Activated CD8-positive, alpha-beta T cell treated with anti-CD3 and anti-CD28 coated beads for 36 hours (primary cell): ENCODE measurements at regions of chr15 and their contacts with region 1.

Region 1: DNA sequence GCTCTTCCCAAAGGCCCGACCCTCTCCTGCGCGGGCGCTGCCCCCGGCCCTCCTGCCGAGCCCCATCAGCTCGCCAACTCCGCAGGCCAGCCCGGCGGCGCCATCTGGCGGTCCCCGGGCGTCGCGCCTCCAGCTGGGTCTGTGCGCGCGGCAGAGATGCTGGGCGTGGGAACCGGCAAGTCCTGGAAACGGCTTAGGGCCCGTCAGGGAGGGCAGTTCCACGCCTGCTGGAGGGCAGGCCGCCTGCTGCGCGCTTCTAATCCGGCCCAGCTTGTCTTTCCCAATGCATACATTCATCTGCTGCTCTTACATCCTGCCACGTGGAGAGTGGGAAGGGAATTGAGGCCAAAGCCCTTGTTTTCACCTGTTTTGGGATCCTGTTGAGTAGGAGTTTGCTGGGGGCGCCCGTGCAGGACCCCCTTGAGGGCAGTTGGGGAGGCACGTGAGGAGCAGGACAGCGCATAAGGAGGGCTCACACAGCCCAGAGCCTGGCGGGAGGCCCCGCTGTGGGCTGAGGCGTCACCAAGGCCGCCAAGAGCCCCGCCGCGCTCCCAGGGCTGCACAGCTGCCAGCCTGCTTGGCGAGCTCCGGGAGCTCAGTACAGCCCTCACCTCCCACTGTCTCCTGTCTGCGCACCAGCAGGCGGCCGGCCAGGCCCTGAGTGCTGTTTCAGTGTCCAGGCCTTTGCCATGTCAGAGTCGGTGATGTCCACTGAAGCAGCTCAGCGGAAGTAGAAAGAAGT is 165.6 kb downstream of the NSMCE3 start:
- DNase-seq: peak; percentile 72
- ATAC-seq: peak; percentile 87
- H3K4me3 Mint-ChIP-seq: peak overlapping the region; percentile 16
- H3K27ac Mint-ChIP-seq: no peak overlapping the region
- H3K4me1 Mint-ChIP-seq: peaks cover 5% of the 10 kb centered on the region
- H3K27me3 Mint-ChIP-seq: no peaks in the 10 kb centered on the region
- CTCF ChIP-seq: peak; percentile 75

Region 2: DNA sequence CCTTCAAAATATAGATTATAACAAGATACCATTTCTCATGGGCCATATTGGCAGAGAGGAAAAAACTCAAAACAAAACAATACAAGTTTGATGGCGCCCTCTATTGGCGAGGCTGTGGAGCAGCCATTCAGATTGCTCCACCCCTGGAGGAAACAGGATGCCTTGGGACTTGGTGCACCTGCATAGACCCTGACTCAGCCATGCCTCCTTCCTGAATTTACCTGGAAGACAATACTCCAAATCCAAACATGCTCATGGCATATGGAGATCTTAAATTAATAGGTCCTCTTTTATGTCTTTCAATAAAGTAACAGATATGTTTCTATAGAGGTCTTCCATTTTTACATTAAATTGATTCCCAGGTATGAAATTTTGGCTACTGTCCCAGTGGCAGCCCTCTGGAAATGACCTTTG is 128.2 kb before region 1 on chr15:
- CTCF ChIA-PET with region 1: interaction called, 17 read pairs
- POLR2A ChIA-PET with region 1: no interaction called
- intact Hi-C with region 1: no loop called
- DNase-seq: peak; percentile 73
- ATAC-seq: peak; percentile 82
- H3K4me3 Mint-ChIP-seq: no peak overlapping the region
- H3K27ac Mint-ChIP-seq: no peak overlapping the region
- H3K4me1 Mint-ChIP-seq: peaks cover 33% of the 10 kb centered on the region
- H3K27me3 Mint-ChIP-seq: no peaks in the 10 kb centered on the region
- CTCF ChIP-seq: peak; percentile 90

Region 3: DNA sequence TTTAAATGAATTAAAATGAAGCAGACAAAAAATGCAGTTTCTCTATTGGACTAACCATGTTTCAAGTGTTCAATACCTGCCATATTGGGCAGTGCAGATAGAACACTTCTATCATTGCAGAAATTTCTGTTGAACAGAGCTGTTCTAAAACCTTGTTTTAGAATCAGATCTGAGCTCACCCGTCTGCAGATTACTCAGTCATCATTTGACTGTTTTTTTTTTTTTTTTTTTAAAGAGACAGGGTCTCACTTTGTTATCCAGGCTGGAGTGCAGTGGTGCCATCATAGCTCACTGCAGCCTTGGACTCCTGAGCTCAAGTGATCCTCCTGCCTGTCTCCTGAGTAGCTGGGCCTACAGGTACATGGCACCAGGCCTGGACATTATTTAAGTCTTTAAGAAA is 89.5 kb before region 1 on chr15:
- CTCF ChIA-PET with region 1: interaction called, 11 read pairs
- POLR2A ChIA-PET with region 1: no interaction called
- intact Hi-C with region 1: no loop called
- DNase-seq: no peak
- ATAC-seq: peak; percentile 24
- H3K4me3 Mint-ChIP-seq: no peak overlapping the region
- H3K27ac Mint-ChIP-seq: no peak overlapping the region
- H3K4me1 Mint-ChIP-seq: peaks cover 44% of the 10 kb centered on the region
- H3K27me3 Mint-ChIP-seq: no peaks in the 10 kb centered on the region
- CTCF ChIP-seq: no peak

Region 4: GRCh38 chr15:29115093-29115991 is 11.3 kb after region 1 on chr15:
- CTCF ChIA-PET with region 1: interaction called, 57 read pairs
- POLR2A ChIA-PET with region 1: no interaction called
- intact Hi-C with region 1: no loop called
- DNase-seq: peak; percentile 28
- ATAC-seq: peak; percentile 32
- H3K4me3 Mint-ChIP-seq: no peak overlapping the region
- H3K27ac Mint-ChIP-seq: no peak overlapping the region
- H3K4me1 Mint-ChIP-seq: peaks cover 17% of the 10 kb centered on the region
- H3K27me3 Mint-ChIP-seq: no peaks in the 10 kb centered on the region
- CTCF ChIP-seq: peak; percentile 33

Region 5: DNA sequence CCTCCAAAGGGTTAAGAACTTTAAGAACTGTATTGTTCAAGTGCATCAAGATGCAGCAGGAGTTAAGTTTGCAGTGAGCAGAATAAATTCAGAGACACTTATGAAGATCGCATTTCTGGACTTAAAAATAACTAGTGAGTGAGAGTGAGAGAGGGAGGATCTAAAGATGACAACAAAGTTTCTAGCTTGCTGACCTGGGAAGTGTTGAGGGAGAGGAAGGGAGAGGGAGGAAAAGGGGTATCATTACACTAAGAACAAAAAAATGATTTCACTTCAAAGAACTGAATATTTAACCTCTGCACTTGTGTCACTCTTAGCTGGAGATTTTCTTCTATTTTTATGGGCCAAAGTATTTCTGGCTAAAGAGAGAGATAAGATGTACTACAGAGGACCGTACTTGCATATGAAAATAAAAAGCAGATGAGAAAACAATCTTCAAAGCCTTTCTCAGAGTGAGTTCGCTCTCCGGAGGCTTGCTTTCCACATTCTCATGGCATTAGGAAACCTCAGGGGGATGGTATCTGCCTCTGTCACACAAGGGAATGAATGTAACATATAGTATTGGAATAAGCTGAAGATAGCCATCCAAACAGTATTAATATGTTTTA is 809.6 kb after region 1 on chr15:
- CTCF ChIA-PET with region 1: no interaction called
- POLR2A ChIA-PET with region 1: no interaction called
- intact Hi-C with region 1: no loop called
- DNase-seq: no peak
- ATAC-seq: no peak
- H3K4me3 Mint-ChIP-seq: no peak overlapping the region
- H3K27ac Mint-ChIP-seq: no peak overlapping the region
- H3K4me1 Mint-ChIP-seq: no peaks in the 10 kb centered on the region
- H3K27me3 Mint-ChIP-seq: peaks cover 8% of the 10 kb centered on the region
- CTCF ChIP-seq: no peak